ENCODE measurements at regions of chr1 and their contacts with region 1.

Region 1: DNA sequence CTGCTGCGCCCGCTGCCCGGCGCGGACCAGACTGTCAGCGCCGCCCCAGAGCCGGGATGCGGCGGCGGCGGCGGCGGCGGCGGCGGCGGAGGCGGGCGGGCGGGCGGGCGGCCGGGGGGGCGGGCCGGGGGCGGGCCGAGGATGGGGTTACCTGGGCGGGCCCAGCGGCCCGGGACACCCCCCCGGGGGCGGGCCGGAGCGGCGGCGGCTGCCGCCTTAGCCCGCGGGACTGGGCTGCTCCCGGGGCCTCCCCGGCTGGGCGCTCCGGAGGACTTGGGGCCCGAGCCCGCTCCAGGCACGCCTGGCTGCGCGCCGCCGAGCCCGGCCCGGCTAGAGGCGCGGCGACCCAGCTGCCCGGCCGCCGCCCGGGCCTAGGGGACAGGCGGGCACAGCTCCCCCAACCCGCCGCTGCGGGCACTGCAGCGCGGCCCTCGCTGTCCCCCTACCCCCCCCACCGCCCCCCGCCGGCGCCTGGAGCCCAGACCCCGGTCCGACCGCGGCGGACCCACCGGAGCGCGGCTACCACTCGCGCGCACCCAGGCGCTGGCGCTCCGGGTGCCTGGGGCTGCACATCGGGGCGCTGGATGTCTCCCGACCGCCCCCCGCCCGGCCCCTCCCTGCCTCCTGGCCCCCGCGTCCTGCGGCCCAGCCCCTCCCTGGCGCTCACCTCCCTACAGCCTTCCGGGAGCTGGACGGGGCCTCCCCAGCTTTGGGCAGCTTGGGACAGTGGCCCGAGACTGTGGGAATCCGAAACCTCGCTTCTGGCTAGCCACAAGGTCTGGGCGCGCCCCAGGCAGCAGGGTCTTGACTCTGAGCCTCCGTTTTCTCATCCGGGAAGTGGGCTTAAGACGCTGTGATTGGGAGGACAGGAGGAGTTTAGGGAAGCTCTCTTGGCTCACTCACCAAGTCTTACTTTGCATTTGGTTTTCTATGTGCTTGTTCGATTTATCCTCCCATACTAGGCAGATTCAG is at the start of gene WNT4:
- DNase-seq: peak; percentile 92
- H3K4me3 ChIP-seq: peak within 1 kb of the TSS; percentile 52 to 53
- H3K27ac ChIP-seq: no peak within 1 kb of the TSS
- H3K4me1 ChIP-seq: peaks cover 0 to 21% of the 10 kb centered on the region in 2 experiments; a peak in 1 of 4 replicates
- H3K27me3 ChIP-seq: peaks cover 5% of the 10 kb centered on the region; the same call in 1 of the 2 replicates
- CTCF ChIP-seq: no peak
- EP300 ChIP-seq: no peak
- RAD21 ChIP-seq: no peak
- polyA plus RNA-seq, gene WNT4: 0.03 and 0.08 TPM in 2 replicates

Region 2: DNA sequence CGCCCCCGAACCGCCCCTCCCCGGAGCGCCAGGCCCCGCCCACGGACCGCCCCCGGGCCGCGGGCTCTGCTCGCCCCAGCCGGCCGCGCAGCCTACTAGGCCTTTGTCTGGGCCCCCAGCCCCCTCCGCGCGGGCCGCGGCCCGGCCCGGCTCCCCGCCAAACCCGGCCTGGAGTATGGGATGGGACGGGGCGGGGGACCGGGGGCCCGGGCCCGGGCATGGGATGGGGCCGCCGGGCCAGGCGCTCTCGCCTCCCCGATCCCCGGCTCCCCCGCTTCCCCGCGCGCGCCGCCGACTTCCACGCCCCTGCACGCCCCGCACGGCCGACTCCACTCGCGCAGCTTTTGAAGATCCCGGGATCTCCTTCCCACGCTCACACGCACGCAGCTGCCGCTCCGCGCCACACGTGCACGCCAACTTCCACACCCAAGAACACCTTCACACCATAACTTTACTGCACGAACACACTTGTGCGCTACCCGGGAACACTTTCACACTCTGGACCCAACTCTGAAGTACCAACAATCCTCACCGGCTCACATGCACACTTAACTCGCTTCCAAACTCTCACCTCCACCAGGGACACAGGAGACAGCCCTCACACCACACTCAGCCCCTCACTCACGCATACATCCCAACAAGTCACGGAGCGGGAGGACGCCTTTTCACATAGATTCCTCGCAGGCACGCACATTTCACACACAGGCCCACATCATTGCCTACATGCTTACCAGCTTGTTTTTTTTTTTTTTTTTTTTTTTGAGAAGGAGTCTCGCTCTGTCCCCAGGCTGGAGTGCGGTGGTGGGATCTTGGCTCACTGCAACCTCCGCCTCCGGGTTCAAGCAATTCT is 205.8 kb before region 1 on chr1:
- CTCF ChIA-PET with region 1: no interaction called
- POLR2A ChIA-PET with region 1: no interaction called
- DNase-seq: peak; percentile 99
- H3K4me3 ChIP-seq: peak overlapping the region; percentile 36 to 54
- H3K27ac ChIP-seq: peak overlapping the region; percentile 58 to 64; a peak in 3 of 4 replicates
- H3K4me1 ChIP-seq: peaks cover 27 to 45% of the 10 kb centered on the region in 2 experiments; a peak in 3 of 4 replicates
- H3K27me3 ChIP-seq: no peaks in the 10 kb centered on the region
- CTCF ChIP-seq: no peak
- EP300 ChIP-seq: no peak
- RAD21 ChIP-seq: no peak

Region 3: DNA sequence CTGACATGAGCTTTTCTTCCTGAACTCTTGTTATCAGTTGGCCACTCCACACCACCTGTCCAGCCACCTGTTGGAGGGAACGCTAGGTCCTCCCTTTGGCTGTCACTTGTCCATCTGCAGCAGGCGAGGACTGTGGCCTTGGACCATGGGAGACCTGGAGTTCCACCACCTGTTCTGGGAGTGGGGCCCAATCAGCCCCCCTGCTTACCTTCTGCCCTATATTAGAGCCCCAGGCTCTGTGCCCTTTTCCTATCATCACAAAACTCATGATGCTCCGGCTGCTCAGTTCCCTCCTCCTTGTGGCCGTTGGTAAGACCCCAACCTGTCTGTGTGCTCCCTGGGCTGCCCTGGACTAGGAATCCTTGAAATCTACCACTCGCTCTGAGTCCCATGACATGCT is 141.9 kb before region 1 on chr1 and contains the start of gene CELA3A:
- CTCF ChIA-PET with region 1: no interaction called
- POLR2A ChIA-PET with region 1: no interaction called
- DNase-seq: no peak
- H3K4me3 ChIP-seq: no peak within 1 kb of the TSS
- H3K27ac ChIP-seq: no peak within 1 kb of the TSS
- H3K4me1 ChIP-seq: no peaks in the 10 kb centered on the region
- H3K27me3 ChIP-seq: no peaks in the 10 kb centered on the region; the same call in 1 of the 2 replicates
- CTCF ChIP-seq: no peak
- EP300 ChIP-seq: no peak
- RAD21 ChIP-seq: no peak
- polyA plus RNA-seq, gene CELA3A: not detected in 2 replicates

Region 4: GRCh38 chr1:22077728-22078127 is 65.6 kb before region 1 on chr1:
- CTCF ChIA-PET with region 1: no interaction called
- POLR2A ChIA-PET with region 1: no interaction called
- DNase-seq: no peak
- H3K4me3 ChIP-seq: no peak overlapping the region
- H3K27ac ChIP-seq: no peak overlapping the region
- H3K4me1 ChIP-seq: no peaks in the 10 kb centered on the region; a peak in 1 of 4 replicates
- H3K27me3 ChIP-seq: no peaks in the 10 kb centered on the region
- CTCF ChIP-seq: no peak
- EP300 ChIP-seq: no peak
- RAD21 ChIP-seq: no peak

Region 5: GRCh38 chr1:22105611-22106207 is 37.6 kb before region 1 on chr1:
- CTCF ChIA-PET with region 1: interaction called, 82 read pairs
- POLR2A ChIA-PET with region 1: no interaction called
- DNase-seq: peak; percentile 64
- H3K4me3 ChIP-seq: no peak overlapping the region; a peak in 1 of 4 replicates
- H3K27ac ChIP-seq: no peak overlapping the region; a peak in 2 of 4 replicates
- H3K4me1 ChIP-seq: peaks cover 4 to 22% of the 10 kb centered on the region in 2 experiments; a peak in 1 of 4 replicates
- H3K27me3 ChIP-seq: no peaks in the 10 kb centered on the region
- CTCF ChIP-seq: peak; percentile 86
- EP300 ChIP-seq: no peak
- RAD21 ChIP-seq: peak; percentile 87

Region 6: DNA sequence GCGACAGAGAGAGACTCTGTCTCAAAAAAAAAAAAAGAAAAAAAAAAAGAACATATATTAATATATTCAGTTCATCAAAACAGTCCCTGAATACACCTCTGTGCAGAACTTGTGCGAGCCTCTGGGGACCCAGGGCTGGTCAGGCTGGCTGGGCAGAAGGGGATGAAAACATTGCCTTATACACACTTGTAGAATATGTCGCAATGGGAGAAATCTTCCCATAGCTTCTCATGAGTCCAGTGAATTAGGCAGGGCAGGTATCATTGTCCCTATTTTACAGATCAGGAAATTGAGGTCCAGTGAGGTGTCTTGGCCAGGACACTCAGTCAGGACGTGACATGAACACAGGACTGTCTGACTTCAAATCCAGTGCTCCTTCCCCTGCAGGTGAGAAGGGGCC is 12.2 kb after region 1 on chr1:
- CTCF ChIA-PET with region 1: interaction called, 10 read pairs
- POLR2A ChIA-PET with region 1: no interaction called
- DNase-seq: no peak
- H3K4me3 ChIP-seq: no peak overlapping the region
- H3K27ac ChIP-seq: no peak overlapping the region
- H3K4me1 ChIP-seq: peaks cover 0 to 13% of the 10 kb centered on the region in 2 experiments; a peak in 1 of 4 replicates
- H3K27me3 ChIP-seq: no peaks in the 10 kb centered on the region
- CTCF ChIP-seq: no peak
- EP300 ChIP-seq: no peak
- RAD21 ChIP-seq: no peak

Measured in SK-N-SH (cell line).